Activated CD8-positive, alpha-beta T cell treated with anti-CD3 and anti-CD28 coated beads for 36 hours (primary cell): ENCODE measurements at regions of chr10 and their contacts with region 1.

Region 1: DNA sequence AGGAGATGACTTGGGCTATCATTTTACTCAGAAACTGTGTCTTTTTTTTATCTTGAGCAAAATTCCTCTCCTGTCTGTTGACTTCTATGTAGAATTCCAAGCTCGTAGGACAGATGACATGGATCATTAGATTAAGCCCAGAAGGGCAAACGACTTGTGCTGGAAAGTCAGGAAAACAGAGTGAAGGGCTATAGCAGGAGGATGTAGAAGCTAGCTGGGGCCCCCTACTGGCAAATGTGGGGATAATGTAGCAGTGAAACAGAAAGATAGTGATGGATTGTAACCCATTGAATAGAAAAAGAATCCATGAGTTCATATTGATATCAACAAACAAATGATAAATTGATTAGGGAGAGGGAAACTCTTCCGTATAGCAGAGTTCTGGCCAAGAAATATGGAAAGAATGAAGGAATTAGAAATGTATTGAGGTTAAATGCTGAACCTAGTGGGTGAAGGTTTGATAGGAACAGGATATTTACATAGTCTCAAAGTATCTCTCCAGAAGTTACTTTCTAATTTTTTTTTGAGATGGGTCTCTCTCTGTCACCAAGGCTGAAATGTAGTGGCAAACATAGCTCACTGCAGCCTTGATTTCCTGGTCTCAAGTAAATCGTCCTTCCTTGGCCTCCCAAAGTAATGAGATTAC is 103.6 kb downstream of the LYZL1 start:
- DNase-seq: peak; percentile 60
- ATAC-seq: peak; percentile 82
- H3K4me3 Mint-ChIP-seq: no peak overlapping the region
- H3K27ac Mint-ChIP-seq: no peak overlapping the region
- H3K4me1 Mint-ChIP-seq: no peaks in the 10 kb centered on the region
- H3K27me3 Mint-ChIP-seq: peaks cover 1% of the 10 kb centered on the region
- CTCF ChIP-seq: peak; percentile 91

Region 2: DNA sequence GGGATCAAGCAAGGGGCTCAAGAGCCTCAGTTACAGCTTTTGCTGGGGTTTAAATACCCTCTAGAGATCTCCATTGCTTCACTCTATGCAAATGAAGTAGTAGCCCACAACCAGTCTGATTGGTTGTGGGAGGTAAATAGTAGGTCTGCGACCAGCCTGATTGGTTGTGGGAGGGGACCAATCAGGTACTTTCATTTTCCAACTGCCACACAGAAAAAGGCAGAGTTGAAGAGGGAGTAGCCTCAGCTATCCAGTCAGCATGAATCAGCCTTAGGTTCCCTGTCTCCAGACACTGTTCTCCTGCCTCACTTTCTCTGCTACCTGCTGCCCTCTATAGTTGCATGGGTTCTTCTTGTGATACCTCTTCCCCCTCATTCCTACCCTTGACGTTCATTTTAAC is 218.2 kb before region 1 on chr10:
- CTCF ChIA-PET with region 1: no interaction called
- POLR2A ChIA-PET with region 1: no interaction called
- intact Hi-C with region 1: no loop called
- DNase-seq: no peak
- ATAC-seq: no peak
- H3K4me3 Mint-ChIP-seq: no peak overlapping the region
- H3K27ac Mint-ChIP-seq: no peak overlapping the region
- H3K4me1 Mint-ChIP-seq: no peaks in the 10 kb centered on the region
- H3K27me3 Mint-ChIP-seq: peaks cover 15% of the 10 kb centered on the region
- CTCF ChIP-seq: no peak

Region 3: GRCh38 chr10:29324220-29324841 is 68.2 kb before region 1 on chr10:
- CTCF ChIA-PET with region 1: no interaction called
- POLR2A ChIA-PET with region 1: no interaction called
- intact Hi-C with region 1: no loop called
- DNase-seq: no peak
- ATAC-seq: no peak
- H3K4me3 Mint-ChIP-seq: no peak overlapping the region
- H3K27ac Mint-ChIP-seq: no peak overlapping the region
- H3K4me1 Mint-ChIP-seq: no peaks in the 10 kb centered on the region
- H3K27me3 Mint-ChIP-seq: peaks cover 11% of the 10 kb centered on the region
- CTCF ChIP-seq: no peak

Region 4: GRCh38 chr10:29403208-29403607 is 10.7 kb after region 1 on chr10:
- CTCF ChIA-PET with region 1: interaction called, 28 read pairs
- POLR2A ChIA-PET with region 1: interaction called, 3 read pairs
- intact Hi-C with region 1: no loop called
- DNase-seq: no peak
- ATAC-seq: no peak
- H3K4me3 Mint-ChIP-seq: no peak overlapping the region
- H3K27ac Mint-ChIP-seq: no peak overlapping the region
- H3K4me1 Mint-ChIP-seq: no peaks in the 10 kb centered on the region
- H3K27me3 Mint-ChIP-seq: peaks cover 4% of the 10 kb centered on the region
- CTCF ChIP-seq: no peak

Region 5: DNA sequence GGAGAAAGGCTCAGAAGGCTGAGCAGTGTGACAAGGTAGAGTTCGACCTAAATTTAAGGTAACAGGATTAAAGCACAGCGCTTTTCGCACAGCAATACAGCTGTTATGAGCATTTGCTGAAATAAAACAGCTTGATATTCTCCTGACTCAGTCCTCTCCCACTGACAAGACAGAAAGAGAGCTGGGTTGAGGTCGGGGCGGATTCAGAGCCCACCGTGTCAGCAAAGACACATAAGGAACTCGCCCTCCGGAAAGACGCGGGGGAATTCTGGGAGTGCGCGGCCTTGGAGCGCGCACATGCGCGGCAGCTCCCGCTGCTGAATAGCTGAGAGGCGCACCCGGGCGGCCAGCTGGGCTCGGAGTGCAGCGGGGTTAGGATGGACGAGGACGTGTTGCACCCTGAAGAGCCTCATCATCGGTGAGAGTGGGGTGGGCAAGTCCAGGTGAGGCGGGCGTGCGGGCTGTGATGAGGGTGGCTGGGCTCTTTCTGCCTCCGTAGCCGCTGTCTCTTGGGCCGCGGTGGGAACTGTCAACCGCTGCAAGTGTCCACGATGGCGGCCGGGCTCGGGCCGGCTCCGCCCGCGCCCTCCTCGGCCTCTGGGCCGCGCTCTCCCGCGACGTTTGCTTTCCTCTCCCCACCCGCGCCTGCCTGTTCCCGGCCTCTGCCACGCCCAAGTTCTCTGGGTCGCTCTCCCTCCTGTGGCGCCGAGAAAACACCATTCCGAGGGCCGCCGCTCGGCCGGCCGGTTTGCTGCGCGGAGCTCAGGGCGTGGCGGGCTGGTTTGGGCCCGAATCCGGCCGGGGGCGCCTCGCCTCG is 16.9 kb after region 1 on chr10:
- CTCF ChIA-PET with region 1: interaction called, 28 read pairs
- POLR2A ChIA-PET with region 1: interaction called, 3 read pairs
- intact Hi-C with region 1: no loop called
- DNase-seq: peak; percentile 48
- ATAC-seq: peak; percentile 69
- H3K4me3 Mint-ChIP-seq: peak overlapping the region; percentile 97
- H3K27ac Mint-ChIP-seq: peak overlapping the region; percentile 92
- H3K4me1 Mint-ChIP-seq: peaks cover 33% of the 10 kb centered on the region
- H3K27me3 Mint-ChIP-seq: peaks cover 1% of the 10 kb centered on the region
- CTCF ChIP-seq: no peak

Region 6: GRCh38 chr10:29555746-29556481 is 163.4 kb after region 1 on chr10:
- CTCF ChIA-PET with region 1: no interaction called
- POLR2A ChIA-PET with region 1: no interaction called
- intact Hi-C with region 1: no loop called
- DNase-seq: no peak
- ATAC-seq: no peak
- H3K4me3 Mint-ChIP-seq: no peak overlapping the region
- H3K27ac Mint-ChIP-seq: no peak overlapping the region
- H3K4me1 Mint-ChIP-seq: peaks cover 5% of the 10 kb centered on the region
- H3K27me3 Mint-ChIP-seq: no peaks in the 10 kb centered on the region
- CTCF ChIP-seq: no peak